Sciatic nerve (tissue), 2 donors: ENCODE measurements at regions of chr2 and their contacts with region 1.

Region 1: DNA sequence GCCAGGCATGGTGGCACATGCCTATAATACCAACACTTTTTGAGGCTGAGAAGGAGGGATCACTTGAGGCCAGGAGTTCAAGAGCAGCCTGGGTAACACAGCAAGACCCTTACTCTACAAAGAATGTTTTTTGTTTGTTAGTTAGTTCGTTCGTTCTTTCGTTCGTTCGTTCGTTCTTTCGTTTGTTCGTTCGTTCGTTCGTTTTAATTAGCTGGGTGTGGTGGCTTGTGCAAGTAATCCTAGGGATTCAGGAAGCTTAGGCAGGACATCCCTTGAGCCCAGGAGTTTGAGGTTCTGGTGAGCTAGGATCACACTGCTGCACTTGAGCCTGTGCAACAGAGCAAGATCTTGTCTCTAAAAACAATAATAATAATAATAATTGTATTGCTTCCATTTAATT is 98.7 kb downstream of the MARCO start:
- DNase-seq: no peak
- ATAC-seq: no peak

Region 2: GRCh38 chr2:117686699-117687098 is 1354.0 kb before region 1 on chr2:
- intact Hi-C with region 1: loop called (anchors 5 kb)
- DNase-seq: no peak
- ATAC-seq: no peak

Region 3: GRCh38 chr2:119455066-119455718 is 414.5 kb after region 1 on chr2:
- intact Hi-C with region 1: no loop called
- DNase-seq: no peak
- ATAC-seq: no peak